ENCODE measurements at regions of chr10 and their contacts with region 1.

Region 1: DNA sequence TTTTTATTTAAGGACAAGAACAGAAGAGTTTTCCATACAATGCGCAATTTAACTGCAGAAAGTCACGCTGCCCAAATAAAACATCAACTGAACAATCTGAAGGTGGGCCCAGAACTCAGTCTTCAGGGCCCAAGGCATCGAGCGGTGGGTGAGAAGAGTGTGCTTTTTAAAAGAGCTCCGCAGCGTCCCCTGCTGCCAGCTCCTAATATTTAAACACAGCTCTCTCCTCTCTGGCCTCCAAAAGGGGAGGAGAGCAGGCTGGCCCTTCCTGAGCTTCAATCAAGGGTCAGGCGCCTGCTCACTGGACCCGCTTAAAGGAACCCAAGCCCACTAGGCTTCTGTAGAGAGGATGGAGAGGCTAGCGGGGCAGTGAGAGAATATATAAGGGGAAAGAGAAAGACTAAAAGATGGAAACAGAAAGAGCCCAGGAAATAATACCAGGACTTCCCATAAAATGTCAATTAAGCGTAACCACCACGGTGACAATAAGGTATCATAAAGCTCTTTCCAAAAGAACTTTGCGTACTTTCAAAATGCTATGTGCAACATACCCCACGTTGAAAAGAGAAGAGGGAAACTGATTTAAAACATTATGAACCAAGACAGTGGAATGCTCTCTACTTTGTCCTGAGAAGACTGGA is 2.8 kb downstream of the FAM53B start:
- DNase-seq: peak; percentile 77 to 82 (median 79)
- H3K4me3 ChIP-seq: peak overlapping the region; percentile 57 to 79
- H3K4me3 Mint-ChIP-seq: peak overlapping the region; percentile 95 to 100 (median 98)
- H3K27ac ChIP-seq: peak overlapping the region; percentile 64
- H3K27ac Mint-ChIP-seq: peak overlapping the region; percentile 87 to 97 (median 96)
- H3K4me1 ChIP-seq: peaks cover 72% of the 10 kb centered on the region
- H3K4me1 Mint-ChIP-seq: peaks cover 60 to 77% (median 69%) of the 10 kb centered on the region in 4 donors
- H3K27me3 ChIP-seq: no peaks in the 10 kb centered on the region
- H3K27me3 Mint-ChIP-seq: no peaks in the 10 kb centered on the region

Region 2: GRCh38 chr10:124461438-124462347 is 279.7 kb before region 1 on chr10 and contains the start of gene LHPP:
- CTCF ChIA-PET with region 1: interaction called, 3 read pairs
- POLR2A ChIA-PET with region 1: interaction called, 3 read pairs
- intact Hi-C with region 1: loop called (anchors 2 kb)
- DNase-seq: peak; percentile 85 to 90 (median 86)
- H3K4me3 ChIP-seq: peak within 1 kb of the TSS; percentile 42 to 76
- H3K4me3 Mint-ChIP-seq: peak within 1 kb of the TSS; percentile 88 to 96 (median 92)
- H3K27ac ChIP-seq: peak within 1 kb of the TSS; percentile 59
- H3K27ac Mint-ChIP-seq: peak within 1 kb of the TSS; percentile 80 to 98 (median 97)
- H3K4me1 ChIP-seq: peaks cover 27% of the 10 kb centered on the region
- H3K4me1 Mint-ChIP-seq: peaks cover 21 to 36% (median 29%) of the 10 kb centered on the region in 4 donors
- H3K27me3 ChIP-seq: no peaks in the 10 kb centered on the region
- H3K27me3 Mint-ChIP-seq: peaks cover 4 to 5% of the 10 kb centered on the region in 2 donors
- total RNA-seq, gene LHPP: 17.9 to 18.3 TPM

Region 3: GRCh38 chr10:124612611-124613498 is 128.5 kb before region 1 on chr10:
- CTCF ChIA-PET with region 1: interaction called, 30 read pairs
- POLR2A ChIA-PET with region 1: interaction called, 11 read pairs
- intact Hi-C with region 1: no loop called
- DNase-seq: peak in 4 of 5 donors; percentile 21 to 57 (median 28)
- H3K4me3 ChIP-seq: no peak overlapping the region
- H3K4me3 Mint-ChIP-seq: peak overlapping the region in 5 of 8 donors; percentile 59 to 80 (median 75)
- H3K27ac ChIP-seq: peak overlapping the region; percentile 37
- H3K27ac Mint-ChIP-seq: peak overlapping the region; percentile 77 to 92 (median 88)
- H3K4me1 ChIP-seq: peaks cover 36% of the 10 kb centered on the region
- H3K4me1 Mint-ChIP-seq: peaks cover 19 to 55% (median 34%) of the 10 kb centered on the region in 4 donors
- H3K27me3 ChIP-seq: no peaks in the 10 kb centered on the region
- H3K27me3 Mint-ChIP-seq: no peaks in the 10 kb centered on the region

Region 4: GRCh38 chr10:124647421-124648130 is 93.8 kb before region 1 on chr10:
- CTCF ChIA-PET with region 1: interaction called, 186 read pairs
- POLR2A ChIA-PET with region 1: interaction called, 137 read pairs
- intact Hi-C with region 1: loop called (anchors 1 kb)
- DNase-seq: peak; percentile 75 to 85 (median 78)
- H3K4me3 ChIP-seq: peak overlapping the region; percentile 26 to 34
- H3K4me3 Mint-ChIP-seq: peak overlapping the region; percentile 41 to 88 (median 80)
- H3K27ac ChIP-seq: peak overlapping the region; percentile 79
- H3K27ac Mint-ChIP-seq: peak overlapping the region; percentile 92 to 99 (median 96)
- H3K4me1 ChIP-seq: peaks cover 95% of the 10 kb centered on the region
- H3K4me1 Mint-ChIP-seq: peaks cover 69 to 100% (median 90%) of the 10 kb centered on the region in 4 donors
- H3K27me3 ChIP-seq: no peaks in the 10 kb centered on the region
- H3K27me3 Mint-ChIP-seq: no peaks in the 10 kb centered on the region

Region 5: DNA sequence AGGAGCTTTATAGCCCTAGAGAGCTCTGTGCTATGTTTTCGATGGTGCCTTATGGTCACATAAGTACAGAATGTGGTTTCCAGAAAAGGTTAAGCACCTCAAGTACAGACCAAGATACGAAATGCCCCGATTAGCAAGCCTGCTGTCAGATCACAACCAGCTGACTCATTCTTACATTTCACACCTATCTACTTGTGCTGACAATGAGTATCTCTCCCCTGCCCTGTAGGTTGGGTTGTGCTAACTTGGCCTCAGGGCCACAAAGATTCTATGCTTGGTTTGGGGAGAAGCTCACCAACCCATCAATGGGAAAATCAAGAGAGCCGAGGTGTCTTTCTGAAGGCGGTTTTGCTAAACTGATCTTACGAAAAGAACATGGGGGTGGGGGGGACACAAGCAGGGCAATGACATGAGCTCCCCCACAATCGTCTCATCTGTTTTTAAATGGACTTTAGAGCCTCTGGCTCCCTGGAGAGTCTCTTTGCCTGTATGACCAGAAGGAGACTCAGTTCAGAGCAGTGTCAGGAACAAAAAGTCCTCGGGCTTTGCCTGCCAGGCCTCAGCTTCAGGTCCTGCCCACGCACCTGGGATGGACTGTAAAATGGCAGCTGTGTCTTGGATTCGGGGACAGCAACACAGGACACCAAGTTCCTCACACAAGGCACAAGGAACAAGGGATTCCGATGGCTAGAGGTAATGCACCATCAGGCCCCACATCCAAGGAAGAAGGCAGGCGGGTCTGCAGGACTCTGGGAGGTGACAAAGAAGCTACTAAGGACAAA is 52.3 kb before region 1 on chr10:
- CTCF ChIA-PET with region 1: interaction called, 42 read pairs
- POLR2A ChIA-PET with region 1: interaction called, 20 read pairs
- intact Hi-C with region 1: no loop called
- DNase-seq: peak; percentile 50 to 81 (median 52)
- H3K4me3 ChIP-seq: no peak overlapping the region
- H3K4me3 Mint-ChIP-seq: peak overlapping the region in 7 of 8 donors; percentile 9 to 88 (median 76)
- H3K27ac ChIP-seq: peak overlapping the region; percentile 42
- H3K27ac Mint-ChIP-seq: peak overlapping the region; percentile 87 to 98 (median 91)
- H3K4me1 ChIP-seq: peaks cover 95% of the 10 kb centered on the region
- H3K4me1 Mint-ChIP-seq: peaks cover 59 to 94% (median 79%) of the 10 kb centered on the region in 4 donors
- H3K27me3 ChIP-seq: no peaks in the 10 kb centered on the region
- H3K27me3 Mint-ChIP-seq: no peaks in the 10 kb centered on the region

Region 6: DNA sequence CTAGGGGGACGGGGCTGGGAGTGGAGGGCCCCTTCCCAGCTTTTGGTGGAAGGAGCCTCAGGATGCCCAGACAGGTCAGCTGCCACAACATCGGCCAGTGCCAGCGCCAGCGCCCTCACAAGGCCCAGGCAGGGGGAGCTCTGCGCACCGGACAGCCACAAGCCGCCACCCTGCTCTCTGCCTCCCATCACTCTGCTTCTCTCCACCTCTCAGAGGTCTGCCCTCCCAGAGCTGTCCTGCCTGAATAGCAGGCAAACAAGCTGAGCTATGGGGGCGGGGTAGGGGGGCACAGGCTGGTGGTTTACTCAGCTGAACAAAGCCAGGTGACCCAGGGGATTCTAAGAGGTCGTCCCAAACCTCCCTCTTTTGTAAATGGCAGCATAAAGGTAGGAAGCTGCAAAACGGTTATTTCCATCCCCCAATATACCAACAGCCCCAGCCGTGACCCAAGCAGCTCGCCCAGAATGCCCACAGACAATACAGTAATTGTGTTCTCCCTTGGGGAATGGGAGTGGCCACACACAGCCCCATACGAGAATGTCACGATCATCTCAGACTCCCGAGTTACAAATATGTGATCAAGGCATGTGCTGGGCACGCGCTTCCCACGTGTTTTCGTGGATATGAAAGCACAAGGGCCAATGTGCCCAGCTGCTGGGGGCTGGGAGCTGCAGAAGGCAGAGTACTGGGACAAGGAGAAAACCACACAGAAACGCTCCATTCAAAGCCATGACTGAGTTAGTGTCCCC is 16.9 kb before region 1 on chr10:
- CTCF ChIA-PET with region 1: interaction called, 556 read pairs
- POLR2A ChIA-PET with region 1: interaction called, 163 read pairs
- intact Hi-C with region 1: loop called (anchors 1 kb)
- DNase-seq: no peak
- H3K4me3 ChIP-seq: peak overlapping the region in 1 of 2 donors; percentile 36
- H3K4me3 Mint-ChIP-seq: peak overlapping the region in 7 of 8 donors; percentile 55 to 87 (median 77)
- H3K27ac ChIP-seq: peak overlapping the region; percentile 82
- H3K27ac Mint-ChIP-seq: peak overlapping the region; percentile 87 to 98 (median 97)
- H3K4me1 ChIP-seq: peaks cover 100% of the 10 kb centered on the region
- H3K4me1 Mint-ChIP-seq: peaks cover 77 to 98% (median 88%) of the 10 kb centered on the region in 4 donors
- H3K27me3 ChIP-seq: no peaks in the 10 kb centered on the region
- H3K27me3 Mint-ChIP-seq: no peaks in the 10 kb centered on the region